HEK293 (cell line): ENCODE measurements at regions of chr1 and their contacts with region 1.

Region 1: GRCh38 chr1:24688621-24689195 is 45.6 kb downstream of the SRRM1 start:
- H3K4me3 ChIP-seq: no peak overlapping the region
- H3K27ac ChIP-seq: no peak overlapping the region
- H3K4me1 ChIP-seq: no peaks in the 10 kb centered on the region; the same call in 1 of the 2 replicates
- CTCF ChIP-seq: peak; percentile 88

Region 2: GRCh38 chr1:24699628-24700027 is 10.9 kb after region 1 on chr1:
- CTCF ChIA-PET with region 1: interaction called, 22 read pairs
- POLR2A ChIA-PET with region 1: no interaction called
- H3K4me3 ChIP-seq: no peak overlapping the region
- H3K27ac ChIP-seq: no peak overlapping the region
- H3K4me1 ChIP-seq: peaks cover 3% of the 10 kb centered on the region; the same call in 1 of the 2 replicates
- CTCF ChIP-seq: no peak

Region 3: DNA sequence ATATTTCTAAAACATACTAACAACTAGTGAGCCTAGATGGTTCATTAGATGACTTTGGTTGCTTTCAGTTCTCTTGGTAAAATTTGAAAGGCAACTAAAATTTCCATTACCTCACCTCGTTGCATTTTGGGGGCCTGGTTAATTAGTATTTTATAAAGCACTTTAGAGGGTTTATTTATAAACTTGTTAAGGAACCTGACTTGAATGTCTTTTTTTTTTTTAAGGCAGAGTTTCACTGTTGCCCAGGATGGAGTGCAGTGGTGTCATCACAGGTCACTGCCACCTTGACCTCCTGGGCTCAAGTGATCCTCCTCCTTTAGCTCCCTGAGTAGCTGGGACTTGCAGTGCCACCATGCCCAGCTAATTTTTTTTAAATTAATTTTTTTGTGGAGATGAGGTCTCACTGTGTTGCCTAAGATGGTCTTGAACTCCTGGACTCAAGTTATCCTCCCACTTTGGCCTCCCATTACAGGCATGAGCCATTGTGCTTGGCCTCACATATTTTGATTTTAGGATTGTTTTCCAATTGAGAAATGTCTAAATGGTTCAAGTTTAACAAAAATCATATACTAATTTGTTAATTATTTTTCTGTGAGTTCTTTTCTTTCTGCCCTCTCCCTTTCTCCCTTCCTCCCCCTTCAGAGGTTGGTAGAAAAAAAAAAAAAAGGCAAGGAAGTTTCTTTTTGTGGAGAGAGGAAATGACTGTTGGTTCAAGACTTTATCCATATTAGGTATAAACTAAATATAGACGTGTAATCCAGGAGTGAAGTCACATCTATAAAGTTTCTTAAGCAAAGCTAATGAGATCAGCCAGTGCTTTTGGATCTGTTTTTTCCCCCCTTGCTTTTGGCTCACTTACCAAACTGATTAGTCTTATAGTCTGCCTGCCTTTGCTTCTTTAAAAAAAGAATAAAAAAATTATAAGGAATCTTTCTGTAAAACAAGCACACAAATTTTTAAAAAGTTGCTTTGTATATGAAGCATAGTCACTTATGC is 81.2 kb after region 1 on chr1:
- CTCF ChIA-PET with region 1: interaction called, 21 read pairs
- POLR2A ChIA-PET with region 1: no interaction called
- H3K4me3 ChIP-seq: no peak overlapping the region
- H3K27ac ChIP-seq: peak overlapping the region; percentile 57
- H3K4me1 ChIP-seq: peaks cover 19% of the 10 kb centered on the region
- CTCF ChIP-seq: no peak

Region 4: DNA sequence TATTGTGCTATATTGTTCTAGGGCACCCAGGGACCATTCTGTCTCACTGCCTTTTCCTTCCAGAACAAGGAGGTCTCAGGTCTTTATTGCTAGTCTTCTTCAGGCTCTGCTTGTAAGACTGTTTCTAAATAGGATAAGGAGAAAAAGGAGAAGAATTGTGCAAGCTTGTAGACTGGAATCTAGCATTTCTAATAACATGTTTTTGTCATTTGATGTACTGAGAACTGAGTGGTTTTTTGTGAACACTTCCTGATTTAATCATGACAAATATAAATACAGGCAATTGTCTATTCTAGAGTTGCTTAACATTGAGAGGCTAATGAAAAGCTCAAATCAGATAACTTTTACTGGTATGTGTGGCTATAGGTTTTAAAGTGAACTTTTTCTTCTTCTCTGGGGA is 134.2 kb after region 1 on chr1:
- CTCF ChIA-PET with region 1: interaction called, 152 read pairs
- POLR2A ChIA-PET with region 1: interaction called, 3 read pairs
- H3K4me3 ChIP-seq: no peak overlapping the region
- H3K27ac ChIP-seq: no peak overlapping the region
- H3K4me1 ChIP-seq: peaks cover 8% of the 10 kb centered on the region
- CTCF ChIP-seq: no peak

Region 5: GRCh38 chr1:24830680-24831272 is 142.1 kb after region 1 on chr1:
- CTCF ChIA-PET with region 1: interaction called, 152 read pairs
- POLR2A ChIA-PET with region 1: interaction called, 8 read pairs
- H3K4me3 ChIP-seq: no peak overlapping the region
- H3K27ac ChIP-seq: no peak overlapping the region
- H3K4me1 ChIP-seq: peaks cover 21% of the 10 kb centered on the region
- CTCF ChIP-seq: no peak; the same call in 1 of the 2 replicates

Region 6: GRCh38 chr1:24841593-24841992 is 152.9 kb after region 1 on chr1:
- CTCF ChIA-PET with region 1: interaction called, 58 read pairs
- POLR2A ChIA-PET with region 1: no interaction called
- H3K4me3 ChIP-seq: no peak overlapping the region
- H3K27ac ChIP-seq: no peak overlapping the region
- H3K4me1 ChIP-seq: no peaks in the 10 kb centered on the region
- CTCF ChIP-seq: no peak